HepG2 (cell line): ENCODE measurements at regions of chr1 and their contacts with region 1.

Region 1: DNA sequence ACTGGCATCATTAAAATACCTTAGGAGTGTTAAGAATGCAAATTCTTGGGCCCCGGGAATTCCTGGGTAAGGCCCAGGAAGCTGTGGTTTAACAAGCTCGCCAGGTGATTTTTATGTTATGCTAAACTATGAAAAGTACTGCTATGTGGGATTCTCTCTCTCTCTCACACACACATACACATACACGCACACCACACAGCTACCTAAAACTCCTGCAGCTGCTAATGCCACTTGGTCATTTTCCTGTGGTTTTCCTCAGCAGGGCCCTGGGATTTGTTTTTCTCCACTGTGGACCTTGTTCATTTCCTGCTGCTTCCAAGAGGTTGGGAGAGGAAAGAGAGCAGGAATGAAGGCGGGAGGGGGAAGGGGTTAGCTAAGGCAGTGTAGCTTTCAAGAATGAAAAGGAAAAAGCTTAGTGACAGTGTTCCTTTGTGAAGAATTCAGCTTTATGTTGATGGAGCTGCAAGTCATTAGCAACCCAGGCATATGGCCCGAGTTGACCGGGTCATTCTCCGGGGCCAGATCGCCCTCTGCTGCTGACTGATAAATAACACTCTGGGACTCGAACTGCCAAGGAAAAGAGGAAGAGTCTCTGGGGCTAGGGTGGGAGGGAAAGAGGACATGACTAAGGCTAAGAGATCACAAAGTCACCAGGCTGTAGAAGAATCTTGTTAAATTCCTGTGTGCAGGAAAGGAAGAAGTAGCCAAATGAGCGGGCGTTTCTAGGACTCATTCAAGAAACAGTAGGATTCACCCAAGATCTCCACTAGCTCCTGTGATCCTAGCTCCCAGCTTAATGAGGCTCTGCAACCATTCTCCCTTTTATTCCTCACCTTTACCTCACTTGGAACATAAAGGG is 30.5 kb upstream of the LRIG2 start:
- DNase-seq: peak; percentile 68
- ATAC-seq: peak; percentile 93
- H3K4me3 ChIP-seq: peak overlapping the region; percentile 4 to 50 (median 36); a peak in 4 of 6 replicates
- H3K27ac ChIP-seq: peak overlapping the region; percentile 31
- H3K4me1 ChIP-seq: peaks cover 46% of the 10 kb centered on the region
- H3K27me3 ChIP-seq: no peaks in the 10 kb centered on the region
- CTCF ChIP-seq: peak; percentile 89
- EP300 ChIP-seq: no peak
- POLR2A ChIP-seq: no peak
- RAD21 ChIP-seq: peak; percentile 87

Region 2: GRCh38 chr1:112809253-112809684 is 233.2 kb before region 1 on chr1:
- CTCF ChIA-PET with region 1: interaction called, 3 read pairs
- POLR2A ChIA-PET with region 1: no interaction called
- in situ Hi-C with region 1: loop called (anchors 5 kb)
- intact Hi-C with region 1: loop called (anchors 1 kb)
- DNase-seq: peak; percentile 28
- ATAC-seq: peak; percentile 80
- H3K4me3 ChIP-seq: no peak overlapping the region
- H3K27ac ChIP-seq: no peak overlapping the region
- H3K4me1 ChIP-seq: peaks cover 31% of the 10 kb centered on the region
- H3K27me3 ChIP-seq: peaks cover 0 to 9% of the 10 kb centered on the region in 2 experiments; a peak in 1 of 5 replicates
- CTCF ChIP-seq: peak; percentile 92
- EP300 ChIP-seq: no peak
- POLR2A ChIP-seq: no peak
- RAD21 ChIP-seq: peak; percentile 56